Caco-2 (cell line): ENCODE measurements at regions of chr9 and their contacts with region 1.

Region 1: GRCh38 chr9:109477258-109478050 is 20.7 kb downstream of the PTPN3 start:
- DNase-seq: peak; percentile 94 to 97
- H3K4me3 ChIP-seq: peak overlapping the region; percentile 19; the same call in 1 of the 2 replicates
- H3K4me3 Mint-ChIP-seq: peak overlapping the region; percentile 59
- H3K27ac Mint-ChIP-seq: peak overlapping the region; percentile 96
- H3K4me1 ChIP-seq: peaks cover 36% of the 10 kb centered on the region
- H3K4me1 Mint-ChIP-seq: peaks cover 38% of the 10 kb centered on the region
- H3K27me3 ChIP-seq: no peaks in the 10 kb centered on the region
- H3K27me3 Mint-ChIP-seq: no peaks in the 10 kb centered on the region
- CTCF ChIP-seq: no peak

Region 2: GRCh38 chr9:109399258-109399767 is 78.1 kb before region 1 on chr9:
- CTCF ChIA-PET with region 1: no interaction called
- POLR2A ChIA-PET with region 1: no interaction called
- intact Hi-C with region 1: no loop called
- DNase-seq: no peak
- H3K4me3 ChIP-seq: no peak overlapping the region
- H3K4me3 Mint-ChIP-seq: no peak overlapping the region
- H3K27ac Mint-ChIP-seq: no peak overlapping the region
- H3K4me1 ChIP-seq: no peaks in the 10 kb centered on the region
- H3K4me1 Mint-ChIP-seq: no peaks in the 10 kb centered on the region
- H3K27me3 ChIP-seq: no peaks in the 10 kb centered on the region
- H3K27me3 Mint-ChIP-seq: no peaks in the 10 kb centered on the region
- CTCF ChIP-seq: no peak

Region 3: GRCh38 chr9:109440797-109441287 is 36.6 kb before region 1 on chr9:
- CTCF ChIA-PET with region 1: interaction called, 7 read pairs
- POLR2A ChIA-PET with region 1: no interaction called
- intact Hi-C with region 1: loop called (anchors 2 kb)
- DNase-seq: peak; percentile 66 to 67
- H3K4me3 ChIP-seq: no peak overlapping the region
- H3K4me3 Mint-ChIP-seq: no peak overlapping the region
- H3K27ac Mint-ChIP-seq: peak overlapping the region; percentile 70
- H3K4me1 ChIP-seq: no peaks in the 10 kb centered on the region
- H3K4me1 Mint-ChIP-seq: no peaks in the 10 kb centered on the region
- H3K27me3 ChIP-seq: no peaks in the 10 kb centered on the region
- H3K27me3 Mint-ChIP-seq: no peaks in the 10 kb centered on the region
- CTCF ChIP-seq: peak; percentile 79 to 80

Region 4: DNA sequence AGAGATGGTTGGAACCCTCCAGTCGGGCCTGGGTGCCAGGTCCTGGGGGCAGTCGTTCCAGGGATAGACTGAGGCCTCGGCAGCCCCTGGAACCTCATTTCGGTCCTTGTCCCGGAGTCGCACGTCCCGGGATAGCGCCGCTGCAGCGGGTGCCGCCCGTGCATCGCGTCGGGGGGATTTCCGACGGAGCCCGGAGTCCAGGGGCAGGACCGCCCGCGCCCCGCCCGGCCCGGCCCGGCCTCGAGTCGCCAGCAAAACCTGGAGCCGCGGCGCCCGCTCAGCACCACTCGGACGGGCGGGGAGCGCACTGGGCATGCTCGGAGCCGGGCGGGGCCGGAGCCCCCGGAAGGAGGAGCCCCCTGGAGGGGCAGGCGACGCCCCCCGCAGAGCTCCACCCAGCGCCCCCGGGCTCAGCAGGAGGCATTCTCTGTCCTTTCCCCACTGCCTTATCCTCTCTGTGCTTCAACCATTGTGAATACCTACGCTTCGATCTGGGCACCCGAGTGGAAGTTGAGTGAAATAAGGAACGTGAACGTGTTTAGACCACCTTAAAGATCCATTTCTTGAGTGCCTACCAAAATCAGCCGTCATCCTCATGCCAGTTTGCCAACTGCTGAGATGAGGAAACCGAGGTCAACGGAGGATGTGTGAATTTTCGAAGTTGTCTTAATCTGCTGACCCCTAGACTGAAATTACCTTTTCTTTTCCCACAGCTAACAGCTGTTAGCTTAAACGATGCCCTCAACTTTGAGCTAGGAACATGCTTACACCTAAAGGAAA is 22.4 kb after region 1 on chr9:
- CTCF ChIA-PET with region 1: interaction called, 3 read pairs
- POLR2A ChIA-PET with region 1: interaction called, 6 read pairs
- intact Hi-C with region 1: loop called (anchors 1 kb)
- DNase-seq: peak; percentile 87 to 88
- H3K4me3 ChIP-seq: peak overlapping the region; percentile 48
- H3K4me3 Mint-ChIP-seq: peak overlapping the region; percentile 83
- H3K27ac Mint-ChIP-seq: no peak overlapping the region
- H3K4me1 ChIP-seq: peaks cover 16% of the 10 kb centered on the region
- H3K4me1 Mint-ChIP-seq: peaks cover 23% of the 10 kb centered on the region
- H3K27me3 ChIP-seq: no peaks in the 10 kb centered on the region
- H3K27me3 Mint-ChIP-seq: no peaks in the 10 kb centered on the region
- CTCF ChIP-seq: no peak

Region 5: DNA sequence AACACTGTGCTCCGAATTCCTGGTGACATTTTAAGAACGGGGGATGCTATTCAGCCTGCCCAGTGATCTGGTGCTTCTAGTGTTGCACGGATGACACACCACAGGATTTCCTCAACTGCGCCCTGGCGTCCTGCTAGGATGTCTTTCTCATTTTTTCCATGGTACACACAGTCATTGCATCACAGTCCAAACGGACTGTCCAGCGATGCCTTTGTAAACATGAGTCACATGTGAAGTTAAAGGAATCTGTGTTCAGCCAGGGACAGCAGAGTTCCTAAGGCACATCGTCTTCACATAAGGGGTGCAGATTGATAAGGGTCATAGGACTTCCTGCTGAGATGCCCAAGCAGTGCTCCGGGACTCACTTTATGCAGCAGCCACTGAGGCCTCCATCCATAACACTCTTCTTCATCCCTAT is 30.0 kb after region 1 on chr9:
- CTCF ChIA-PET with region 1: no interaction called
- POLR2A ChIA-PET with region 1: no interaction called
- intact Hi-C with region 1: loop called (anchors 2 kb)
- DNase-seq: peak; percentile 60 to 61
- H3K4me3 ChIP-seq: no peak overlapping the region
- H3K4me3 Mint-ChIP-seq: no peak overlapping the region
- H3K27ac Mint-ChIP-seq: no peak overlapping the region
- H3K4me1 ChIP-seq: peaks cover 17% of the 10 kb centered on the region
- H3K4me1 Mint-ChIP-seq: peaks cover 15% of the 10 kb centered on the region
- H3K27me3 ChIP-seq: no peaks in the 10 kb centered on the region
- H3K27me3 Mint-ChIP-seq: no peaks in the 10 kb centered on the region
- CTCF ChIP-seq: no peak